Lower leg skin (tissue), 4 donors: ENCODE measurements at regions of chr2 and their contacts with region 1.

Region 1: DNA sequence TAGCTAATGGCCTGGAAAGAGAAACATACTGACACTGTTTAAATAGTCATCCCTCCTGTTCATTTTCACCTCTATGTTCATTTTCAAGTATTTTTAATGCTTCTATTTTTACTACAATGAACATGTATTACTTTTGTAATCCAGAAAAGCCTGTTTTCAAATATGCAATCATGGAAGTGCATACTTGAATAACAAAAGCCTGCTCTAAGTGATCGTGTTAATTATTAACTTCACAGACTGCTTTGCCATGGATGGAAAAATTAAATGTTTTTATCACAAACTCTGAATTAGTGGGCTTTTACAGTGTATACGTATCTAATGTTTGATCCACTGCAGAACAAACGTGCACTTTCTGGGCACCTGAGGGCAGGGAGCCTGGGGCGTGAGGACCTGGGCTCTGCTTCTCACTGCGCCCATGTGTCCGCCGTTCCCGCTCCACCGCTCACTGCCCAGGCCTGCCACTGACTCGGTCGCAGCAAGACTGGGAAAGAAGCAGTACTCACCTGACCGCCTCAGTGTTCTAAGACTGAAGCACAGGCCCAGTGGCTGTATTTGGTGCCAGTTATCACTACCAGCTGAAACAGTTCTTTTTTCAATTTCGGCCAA is 80.6 kb downstream of the UXS1 start:
- DNase-seq: no peak
- H3K4me3 ChIP-seq: no peak overlapping the region
- CTCF ChIP-seq: no peak
- POLR2A ChIP-seq: no peak

Region 2: GRCh38 chr2:106542811-106543259 is 429.4 kb after region 1 on chr2:
- intact Hi-C with region 1: loop called (anchors 5 kb)
- DNase-seq: peak; percentile 60 to 94
- H3K4me3 ChIP-seq: no peak overlapping the region
- CTCF ChIP-seq: no peak
- POLR2A ChIP-seq: no peak